ENCODE measurements at regions of chr7 and their contacts with region 1.

Region 1: DNA sequence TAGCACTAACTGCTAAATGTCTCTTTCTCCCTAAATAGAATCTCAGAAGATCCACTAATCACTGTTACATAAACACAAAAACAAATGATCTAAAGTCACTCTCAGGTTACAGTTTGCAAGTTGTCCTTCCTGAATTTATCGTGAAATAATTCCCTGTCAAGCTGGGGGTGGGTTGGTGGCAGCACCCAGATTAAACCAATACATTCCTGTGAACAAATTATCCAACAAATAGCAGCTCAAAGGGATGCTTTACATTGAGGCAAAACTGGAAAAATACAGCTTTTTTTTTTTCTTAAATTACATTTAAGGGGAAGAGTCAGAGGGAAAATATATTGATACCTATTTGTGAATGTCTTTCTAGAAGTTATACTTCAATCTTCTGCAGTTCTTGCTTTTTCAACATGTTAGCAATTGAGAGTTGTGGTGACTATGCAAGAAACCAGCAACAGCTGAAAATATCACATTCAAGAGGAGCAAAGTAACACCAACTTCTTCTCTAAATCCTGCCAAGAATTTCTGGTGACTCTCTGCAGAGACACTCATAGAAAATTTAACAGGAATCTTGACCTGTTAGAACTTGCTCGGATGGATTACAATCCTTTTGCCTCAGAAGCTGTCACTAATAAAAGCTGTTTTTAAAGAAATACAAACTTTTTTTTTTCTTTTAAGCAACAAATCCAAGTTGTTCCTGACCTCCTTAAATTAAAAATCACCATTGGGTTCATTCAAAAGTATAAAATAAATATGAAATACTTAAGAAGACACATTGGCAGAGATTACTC is 18.9 kb downstream of the LMOD2 start:
- DNase-seq: no peak

Region 2: GRCh38 chr7:123548406-123548805 is 126.2 kb before region 1 on chr7:
- intact Hi-C with region 1: no loop called
- DNase-seq: no peak

Region 3: GRCh38 chr7:123865517-123866117 is 191.0 kb after region 1 on chr7:
- intact Hi-C with region 1: loop called in 1 of 2 experiments (anchors 10 kb)
- DNase-seq: no peak

Measured in posterior vena cava (tissue), 2 donors.